ENCODE measurements at regions of chr4 and their contacts with region 1.

Region 1: DNA sequence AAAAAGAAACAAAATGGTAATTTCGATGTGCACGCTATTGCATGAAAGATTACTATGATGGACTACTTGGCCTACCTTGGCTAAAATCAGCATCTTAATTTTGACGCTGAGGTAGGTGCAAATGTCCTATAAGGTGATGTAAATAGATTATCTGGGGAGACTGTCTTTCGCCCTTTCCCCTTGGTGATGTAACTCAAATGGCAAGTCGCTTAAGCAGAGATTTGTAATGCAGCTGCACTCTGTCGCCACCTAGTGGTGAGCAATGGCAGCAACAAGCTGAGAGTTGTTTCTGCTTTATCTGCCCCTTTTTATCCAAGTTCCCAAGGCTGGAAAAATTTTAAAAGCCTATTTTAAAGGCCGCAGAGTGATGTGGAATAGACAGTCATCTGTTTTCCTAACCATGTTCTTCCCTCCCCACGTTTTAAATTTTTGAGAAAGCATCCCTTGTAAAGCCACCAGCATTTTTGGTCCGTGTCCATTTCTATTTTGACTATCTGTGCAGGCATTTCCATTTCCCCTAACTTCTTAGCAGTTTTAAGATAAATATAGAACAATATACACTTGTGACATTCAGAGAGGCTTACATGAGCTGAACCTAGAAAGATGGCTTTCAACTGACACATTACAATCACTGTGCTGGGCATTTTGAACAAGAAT is 62.4 kb upstream of the PDLIM3 start:
- DNase-seq: peak; percentile 24
- H3K4me3 ChIP-seq: no peak overlapping the region
- CTCF ChIP-seq: peak; percentile 86

Region 2: GRCh38 chr4:185471235-185472102 is 126.2 kb before region 1 on chr4 and contains the start of gene CCDC110:
- CTCF ChIA-PET with region 1: interaction called, 16 read pairs
- POLR2A ChIA-PET with region 1: no interaction called
- DNase-seq: peak; percentile 64
- H3K4me3 ChIP-seq: peak within 1 kb of the TSS; percentile 72
- CTCF ChIP-seq: peak; percentile 69

Region 3: DNA sequence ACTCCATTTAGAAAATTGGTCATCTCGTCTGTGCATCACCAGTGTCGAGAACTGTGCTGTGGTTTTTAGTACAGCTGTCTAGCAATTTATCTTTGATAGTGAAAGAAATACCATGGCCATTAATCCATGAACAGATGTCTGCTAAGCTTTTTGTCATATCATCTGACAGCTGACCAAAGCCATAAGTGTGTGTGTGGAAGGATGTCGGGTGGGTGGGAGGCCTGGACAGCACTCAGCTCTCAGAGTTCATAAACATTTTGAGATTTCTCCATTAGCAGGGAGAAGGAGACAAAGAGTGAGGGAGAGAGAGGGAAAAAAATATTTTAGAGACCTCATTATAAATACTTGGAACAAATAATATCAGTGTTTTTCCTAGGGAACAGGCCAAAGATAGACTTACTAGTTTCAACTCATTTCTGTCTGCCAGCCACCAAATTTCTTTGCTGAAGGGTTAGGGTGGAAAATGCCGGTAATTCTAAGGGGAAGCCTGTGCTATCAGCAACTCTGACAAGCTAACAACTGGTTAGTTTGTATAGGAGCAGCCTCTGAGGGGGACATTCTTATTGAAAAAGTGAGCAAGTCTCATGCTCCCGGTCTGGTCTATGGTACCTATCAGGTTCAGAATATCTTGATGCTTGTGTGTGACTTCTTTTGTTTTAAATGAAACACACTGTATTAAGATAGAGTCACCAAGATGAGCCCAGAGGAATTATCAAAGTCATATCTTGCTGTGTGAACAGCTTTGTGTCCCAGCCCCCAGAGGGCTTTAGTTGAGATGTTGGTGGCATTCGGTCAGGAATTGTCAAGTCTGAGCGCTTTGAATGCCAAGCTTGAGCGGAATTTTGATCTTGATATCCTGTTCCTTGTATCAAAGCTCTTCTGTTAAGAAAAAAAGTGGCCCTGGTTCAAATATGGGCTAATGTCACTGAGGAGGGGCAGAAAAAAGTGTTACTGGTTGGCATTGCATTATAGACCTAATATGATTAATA is 20.4 kb before region 1 on chr4:
- CTCF ChIA-PET with region 1: interaction called, 25 read pairs
- POLR2A ChIA-PET with region 1: no interaction called
- DNase-seq: no peak
- H3K4me3 ChIP-seq: no peak overlapping the region
- CTCF ChIP-seq: no peak

Region 4: DNA sequence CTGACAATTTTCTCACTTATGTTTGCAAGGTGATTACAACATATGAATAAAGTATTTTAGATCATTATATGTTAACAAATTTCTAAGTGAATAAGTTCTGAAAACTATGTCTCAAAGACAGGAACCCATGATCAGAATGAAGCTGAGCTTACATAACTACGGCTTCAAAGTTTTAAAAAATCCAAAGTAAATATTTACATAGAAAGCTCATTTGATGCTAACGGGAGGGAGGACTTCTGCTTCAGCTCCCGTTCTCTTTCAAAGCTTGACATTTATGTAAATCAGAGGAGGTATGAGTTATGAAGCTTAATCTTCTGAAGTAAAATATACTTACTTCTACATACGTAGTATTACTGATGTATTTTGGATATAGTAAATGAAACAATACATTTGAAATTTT is 10.5 kb after region 1 on chr4:
- CTCF ChIA-PET with region 1: interaction called, 59 read pairs
- POLR2A ChIA-PET with region 1: no interaction called
- DNase-seq: no peak
- H3K4me3 ChIP-seq: no peak overlapping the region
- CTCF ChIP-seq: no peak

Region 5: DNA sequence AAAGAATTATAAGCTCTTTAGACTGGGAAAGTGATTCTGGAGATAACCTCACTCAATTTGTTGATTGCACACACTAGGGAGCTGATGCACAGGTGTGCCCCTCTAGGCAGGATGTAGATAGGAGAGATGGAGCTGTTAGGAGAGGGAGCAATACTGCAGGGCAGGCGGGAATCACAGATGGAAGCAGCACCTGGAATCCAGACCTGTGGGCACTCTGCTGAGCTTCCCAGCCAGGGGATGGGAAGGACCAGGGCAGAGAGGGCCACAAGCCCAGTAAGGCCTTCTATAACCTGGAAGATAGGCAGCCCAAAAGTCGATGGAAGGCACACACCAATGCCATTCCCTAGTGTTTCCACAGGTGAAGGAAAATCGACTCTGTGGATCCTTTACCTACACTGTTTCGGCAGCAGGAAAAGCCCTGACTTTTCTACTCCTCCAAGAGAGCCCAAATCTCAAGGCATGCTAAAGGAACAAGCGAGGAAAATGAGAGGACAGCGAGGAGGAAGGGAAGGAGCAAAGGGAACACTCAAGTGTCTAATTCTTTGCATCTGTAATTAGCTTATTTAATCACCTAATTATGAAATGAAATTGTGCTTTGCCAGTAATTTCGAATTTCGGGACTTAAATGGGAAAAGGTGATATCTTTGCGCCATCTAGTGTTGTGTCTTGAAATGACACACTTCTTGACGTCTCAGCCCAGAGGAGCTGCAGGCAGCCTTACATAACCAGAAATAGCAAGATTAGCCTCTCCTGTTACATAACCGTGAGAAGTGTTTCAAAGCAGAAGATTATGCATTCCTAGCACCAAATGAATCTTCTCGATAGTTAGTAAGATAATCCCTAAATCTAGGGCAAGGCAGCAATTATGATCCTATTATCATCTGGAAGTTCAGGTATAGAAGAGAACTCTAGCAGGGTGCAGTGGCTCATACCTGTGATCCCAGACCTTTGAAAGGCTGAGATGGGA is 440.3 kb after region 1 on chr4:
- CTCF ChIA-PET with region 1: interaction called, 72 read pairs
- POLR2A ChIA-PET with region 1: no interaction called
- DNase-seq: peak; percentile 51
- H3K4me3 ChIP-seq: no peak overlapping the region
- CTCF ChIP-seq: peak; percentile 44

Measured in AG04449 (cell line).